Activated naive CD4-positive, alpha-beta T cell treated with anti-CD3 and anti-CD28 coated beads, Interleukin-2, amount 10 ng/mL, durations not matched to agents 7 days and 5 days (primary cell): ENCODE measurements at regions of chr20 and their contacts with region 1.

Region 1: GRCh38 chr20:682123-682522 is 6.5 kb upstream of the SCRT2 start:
- DNase-seq: no peak
- H3K4me3 Mint-ChIP-seq: no peak overlapping the region
- H3K27ac Mint-ChIP-seq: no peak overlapping the region
- H3K4me1 Mint-ChIP-seq: no peaks in the 10 kb centered on the region
- H3K27me3 Mint-ChIP-seq: peaks cover 44% of the 10 kb centered on the region

Region 2: DNA sequence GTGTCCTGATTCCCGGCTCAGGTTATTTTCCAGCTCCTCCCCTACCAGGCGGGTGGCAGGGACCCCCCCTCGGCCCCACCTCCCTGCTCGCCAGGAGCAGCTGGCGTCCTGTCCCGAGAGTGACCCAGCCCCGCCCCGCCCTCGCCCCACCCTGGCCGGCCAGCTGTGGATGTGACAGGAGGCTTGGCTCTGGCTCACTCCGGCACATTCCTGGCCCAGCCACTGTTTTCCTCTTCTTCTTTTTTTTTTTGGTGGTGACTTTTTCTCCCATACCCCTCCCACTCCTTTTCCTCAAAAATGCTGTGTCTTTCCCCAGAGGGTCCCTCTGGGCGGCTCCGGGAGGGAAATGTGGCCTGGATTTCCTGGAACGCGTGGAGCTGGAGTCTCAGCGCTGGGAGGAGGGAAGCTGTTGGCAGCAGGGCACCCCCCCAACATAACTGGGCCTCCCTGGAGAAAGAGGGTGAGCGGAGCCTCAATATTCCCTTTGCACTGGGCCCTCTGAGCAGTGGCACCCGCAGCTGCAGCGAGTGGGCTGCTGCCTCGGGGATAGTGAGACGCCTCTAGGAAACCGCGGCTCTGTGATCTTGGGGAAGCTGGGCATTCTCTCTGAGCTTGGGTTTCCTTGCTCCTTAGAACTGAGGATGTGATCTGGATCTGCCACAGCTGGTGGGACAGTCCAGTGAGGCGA is 110.2 kb before region 1 on chr20:
- CTCF ChIA-PET with region 1: no interaction called
- DNase-seq: no peak
- H3K4me3 Mint-ChIP-seq: no peak overlapping the region
- H3K27ac Mint-ChIP-seq: no peak overlapping the region
- H3K4me1 Mint-ChIP-seq: no peaks in the 10 kb centered on the region
- H3K27me3 Mint-ChIP-seq: peaks cover 59% of the 10 kb centered on the region

Region 3: DNA sequence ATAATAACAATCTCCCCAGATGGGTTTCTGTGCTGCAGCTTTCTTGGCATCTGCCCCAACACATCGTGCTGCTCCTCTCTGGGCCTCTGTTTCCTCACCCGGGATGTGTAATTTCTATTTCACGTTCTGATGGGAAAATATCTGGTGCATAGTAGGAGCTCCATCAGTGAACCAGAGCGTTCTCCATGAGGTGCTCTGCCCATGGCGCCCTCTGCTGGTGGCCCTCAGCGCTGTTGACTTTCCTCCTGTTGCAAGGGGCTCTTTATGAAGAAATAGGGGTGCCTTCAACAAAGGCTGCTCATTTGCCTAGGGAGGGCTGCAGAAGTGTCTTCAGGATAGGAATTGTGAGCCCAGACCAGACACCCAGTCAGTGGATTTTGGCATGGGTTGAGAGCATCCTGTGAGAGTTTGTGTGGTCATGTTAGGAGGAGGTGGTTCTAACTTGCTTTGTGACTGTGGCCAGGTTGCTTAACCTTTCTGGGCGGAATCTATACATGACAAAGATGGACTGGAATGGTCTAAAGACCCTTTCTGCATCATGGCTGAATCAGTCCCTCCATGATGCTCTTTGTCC is 14.6 kb before region 1 on chr20:
- CTCF ChIA-PET with region 1: interaction called, 10 read pairs
- DNase-seq: peak; percentile 76
- H3K4me3 Mint-ChIP-seq: no peak overlapping the region
- H3K27ac Mint-ChIP-seq: no peak overlapping the region
- H3K4me1 Mint-ChIP-seq: peaks cover 15% of the 10 kb centered on the region
- H3K27me3 Mint-ChIP-seq: peaks cover 94% of the 10 kb centered on the region